Right lobe of liver (tissue), 6 donors: ENCODE measurements at regions of chr17 and their contacts with region 1.

Region 1: GRCh38 chr17:20992987-20993862 is 49.6 kb downstream of the USP22 start:
- DNase-seq: no peak
- ATAC-seq: peak; percentile 70 to 90 (median 81)
- H3K4me3 ChIP-seq: no peak overlapping the region
- H3K27ac ChIP-seq: no peak overlapping the region
- H3K4me1 ChIP-seq: no peaks in the 10 kb centered on the region
- H3K27me3 ChIP-seq: no peaks in the 10 kb centered on the region
- CTCF ChIP-seq: peak; percentile 86 to 89 (median 88)
- POLR2A ChIP-seq: no peak

Region 2: DNA sequence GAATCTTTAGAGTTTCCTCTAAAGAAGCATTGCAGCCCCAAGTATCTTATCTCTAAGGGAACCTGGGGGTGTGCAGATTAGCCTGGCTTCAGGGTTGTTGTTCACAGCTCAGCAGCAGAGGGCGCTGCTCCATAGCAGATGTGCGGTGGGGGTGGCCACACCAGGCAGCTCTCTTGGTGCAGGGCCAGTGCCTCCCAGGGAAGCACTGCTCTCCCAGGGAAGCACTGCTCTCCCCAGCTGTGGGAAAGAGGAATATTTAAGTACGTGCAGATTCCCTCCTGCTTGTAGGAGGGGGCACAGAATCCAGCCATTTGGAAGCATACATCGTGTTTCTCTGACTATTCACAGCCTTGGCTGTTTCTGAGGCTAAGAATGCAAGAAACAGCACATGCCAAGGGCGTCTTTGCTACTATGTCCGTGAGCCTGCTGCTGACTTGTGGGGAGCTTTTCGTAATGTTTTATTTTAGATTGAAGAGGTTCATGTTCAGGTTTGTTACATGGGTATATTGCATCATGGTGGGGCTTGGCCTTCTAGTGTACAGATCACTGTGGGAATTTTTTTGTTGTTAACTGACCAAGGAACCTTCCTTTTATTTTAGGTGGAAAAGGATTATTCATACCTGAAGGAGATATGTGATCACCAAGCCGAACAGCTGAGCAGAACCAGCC is 766.3 kb before region 1 on chr17:
- intact Hi-C with region 1: loop called in 1 of 2 experiments (anchors 10 kb)
- DNase-seq: peak; percentile 82 to 86 (median 83)
- ATAC-seq: peak; percentile 98 to 100 (median 100)
- H3K4me3 ChIP-seq: no peak overlapping the region
- H3K27ac ChIP-seq: no peak overlapping the region
- H3K4me1 ChIP-seq: no peaks in the 10 kb centered on the region
- H3K27me3 ChIP-seq: no peaks in the 10 kb centered on the region
- CTCF ChIP-seq: peak; percentile 76 to 86 (median 78)
- POLR2A ChIP-seq: no peak

Region 3: DNA sequence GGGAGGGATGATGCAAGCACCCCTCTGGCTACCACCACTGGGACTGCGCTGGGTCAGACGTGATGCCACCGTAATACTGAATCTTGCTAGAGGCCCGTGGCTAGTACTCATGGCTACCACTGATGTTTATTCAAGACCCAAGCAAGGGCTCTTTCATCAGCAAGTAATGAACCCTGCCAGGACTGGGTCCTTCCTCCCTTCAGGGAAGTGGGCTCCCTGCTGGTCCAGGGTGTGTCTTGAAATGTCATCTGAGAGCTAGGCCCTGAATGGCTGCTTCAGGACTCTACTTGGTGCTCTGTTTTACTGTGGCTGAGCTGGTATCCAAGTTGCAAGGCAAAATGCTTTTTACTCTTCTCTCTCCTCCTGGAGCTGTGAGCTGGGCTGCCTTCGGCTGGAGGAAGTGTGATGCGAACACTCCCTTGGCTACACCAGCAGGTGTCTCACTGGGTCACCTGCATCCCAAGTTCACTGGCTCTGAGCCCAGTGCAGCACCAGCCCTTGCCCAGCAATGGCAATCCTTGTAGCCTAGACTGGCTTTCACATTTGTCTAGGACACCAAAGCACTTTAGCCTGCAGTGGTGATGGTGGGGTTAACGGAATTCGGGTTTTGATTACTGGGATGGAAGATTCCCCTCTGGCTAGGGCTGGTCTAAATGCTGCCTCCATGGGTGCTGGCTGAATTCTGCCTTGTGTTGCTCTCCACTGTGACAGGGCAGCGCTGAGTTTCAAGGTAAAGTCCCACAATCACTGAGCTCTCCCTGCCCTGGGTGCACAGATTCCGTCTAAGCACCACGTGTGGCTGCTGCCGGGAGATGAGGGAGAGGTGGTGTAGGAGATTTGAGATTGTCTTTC is 49.0 kb before region 1 on chr17:
- intact Hi-C with region 1: loop called (anchors 5 to 10 kb)
- DNase-seq: peak; percentile 81 to 85 (median 84)
- ATAC-seq: peak; percentile 99 to 100 (median 100)
- H3K4me3 ChIP-seq: no peak overlapping the region
- H3K27ac ChIP-seq: no peak overlapping the region
- H3K4me1 ChIP-seq: no peaks in the 10 kb centered on the region
- H3K27me3 ChIP-seq: no peaks in the 10 kb centered on the region
- CTCF ChIP-seq: peak; percentile 62 to 78 (median 66)
- POLR2A ChIP-seq: no peak